Naive thymus-derived CD4-positive, alpha-beta T cell (primary cell): ENCODE measurements at regions of chr19 and their contacts with region 1.

Region 1: GRCh38 chr19:37691881-37692504 is 27.6 kb downstream of the ZNF607 start:
- DNase-seq: peak; percentile 52 to 83 (median 73)
- ATAC-seq: peak; percentile 97
- H3K4me3 ChIP-seq: peak overlapping the region; percentile 95
- H3K4me3 Mint-ChIP-seq: peak overlapping the region; percentile 83 to 98 (median 96)
- H3K27ac ChIP-seq: peak overlapping the region; percentile 82
- H3K27ac Mint-ChIP-seq: peak overlapping the region; percentile 69 to 98 (median 96)
- H3K4me1 ChIP-seq: peaks cover 0 to 4% of the 10 kb centered on the region in 2 donors
- H3K4me1 Mint-ChIP-seq: peaks cover 5 to 17% (median 11%) of the 10 kb centered on the region in 7 donors
- H3K27me3 ChIP-seq: no peaks in the 10 kb centered on the region
- H3K27me3 Mint-ChIP-seq: no peaks in the 10 kb centered on the region

Region 2: DNA sequence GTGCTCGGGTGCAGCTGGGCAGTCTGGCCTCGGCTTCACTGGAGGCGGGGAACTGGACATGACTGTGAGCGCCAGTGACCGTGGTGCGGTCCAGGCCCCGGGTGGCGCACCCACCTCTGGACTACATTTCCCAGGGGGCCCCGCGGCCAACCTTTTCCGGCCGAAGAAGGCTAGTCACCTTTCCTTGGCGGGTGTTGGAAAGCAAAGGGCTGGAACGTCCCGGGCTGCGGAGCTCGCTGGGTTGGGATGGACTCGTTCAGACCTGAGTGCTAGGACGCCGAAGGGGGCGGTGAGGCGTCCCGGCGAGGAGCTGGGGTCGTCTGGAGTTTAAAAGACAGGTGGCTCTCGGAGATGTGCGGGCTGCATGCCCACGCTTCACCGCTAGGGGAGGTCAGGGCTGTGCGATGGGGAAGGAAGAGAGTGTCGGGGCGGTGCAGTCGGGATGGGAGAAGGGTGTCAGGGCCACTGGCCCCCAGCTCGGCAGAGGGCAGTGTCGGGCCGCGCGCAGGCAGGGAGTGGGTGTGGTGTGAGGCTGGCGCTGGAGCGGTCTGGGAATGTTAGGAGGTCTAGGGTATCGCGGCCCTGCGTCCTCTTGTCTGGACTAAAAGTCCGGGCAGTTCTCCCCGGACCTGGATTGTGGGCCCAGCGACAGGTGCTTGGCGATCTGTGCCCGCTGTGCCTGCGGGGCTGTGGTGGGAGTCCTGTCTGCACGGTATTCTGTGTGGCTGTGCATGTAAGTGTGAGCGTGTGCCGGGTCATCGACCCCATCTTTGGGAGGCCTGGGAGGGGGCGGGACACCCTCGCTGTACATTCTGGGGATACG is 718.8 kb before region 1 on chr19:
- CTCF ChIA-PET with region 1: no interaction called
- POLR2A ChIA-PET with region 1: no interaction called
- intact Hi-C with region 1: loop called in 1 of 2 experiments (anchors 1 kb)
- DNase-seq: peak; percentile 56 to 84 (median 73)
- ATAC-seq: peak; percentile 96
- H3K4me3 ChIP-seq: peak overlapping the region; percentile 100
- H3K4me3 Mint-ChIP-seq: peak overlapping the region; percentile 92 to 99 (median 97)
- H3K27ac ChIP-seq: peak overlapping the region; percentile 75
- H3K27ac Mint-ChIP-seq: peak overlapping the region; percentile 83 to 97 (median 92)
- H3K4me1 ChIP-seq: peaks cover 5 to 15% of the 10 kb centered on the region in 2 donors
- H3K4me1 Mint-ChIP-seq: peaks cover 9 to 22% (median 13%) of the 10 kb centered on the region in 7 donors
- H3K27me3 ChIP-seq: no peaks in the 10 kb centered on the region
- H3K27me3 Mint-ChIP-seq: no peaks in the 10 kb centered on the region

Region 3: DNA sequence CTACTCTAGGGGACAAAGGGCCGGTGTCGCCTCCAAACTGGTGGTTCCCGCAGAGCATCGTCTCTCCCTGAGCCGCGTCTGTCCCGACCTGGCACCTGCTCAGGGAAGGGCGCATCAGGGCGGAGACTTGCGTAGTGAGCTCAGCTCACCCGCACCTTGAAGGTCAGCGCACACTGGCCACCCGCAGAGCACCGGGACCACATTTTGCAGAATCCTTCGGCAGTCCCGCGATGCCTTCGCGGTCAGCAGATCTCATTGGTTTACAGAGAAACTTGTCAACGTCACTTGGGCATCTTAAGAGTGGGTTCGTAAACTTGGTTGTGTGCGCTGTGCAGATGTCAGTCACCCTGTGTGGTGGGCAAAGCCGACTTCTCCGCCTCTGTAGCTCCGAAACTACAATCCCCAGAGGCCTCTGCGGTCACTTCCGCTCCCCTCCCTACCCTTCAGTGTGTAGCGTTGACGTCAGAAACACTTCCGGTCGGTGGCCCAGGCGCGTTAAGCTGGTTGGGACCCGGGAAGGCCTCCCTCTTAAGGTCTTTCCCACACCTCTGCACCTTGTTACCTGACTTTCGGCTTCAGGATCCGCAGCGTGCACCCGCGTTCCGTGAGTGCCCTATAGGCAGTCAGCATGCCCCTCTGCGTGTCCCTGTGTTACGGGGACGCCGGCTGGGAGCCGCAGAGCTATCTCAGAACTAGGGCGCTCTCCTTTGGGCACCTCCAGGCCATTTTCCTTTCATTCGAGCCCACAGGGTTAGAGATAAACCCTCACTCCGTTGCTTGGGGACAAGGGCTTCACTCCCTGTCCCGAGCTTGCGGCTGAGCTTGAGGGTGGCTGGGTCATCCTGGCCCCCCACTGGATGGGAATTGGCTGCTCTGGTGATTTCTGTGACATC is 357.6 kb before region 1 on chr19:
- CTCF ChIA-PET with region 1: no interaction called
- POLR2A ChIA-PET with region 1: no interaction called
- intact Hi-C with region 1: loop called in 1 of 2 experiments (anchors 10 kb)
- DNase-seq: peak; percentile 52 to 93 (median 84)
- ATAC-seq: peak; percentile 99
- H3K4me3 ChIP-seq: peak overlapping the region; percentile 69
- H3K4me3 Mint-ChIP-seq: peak overlapping the region; percentile 82 to 93 (median 90)
- H3K27ac ChIP-seq: peak overlapping the region; percentile 88
- H3K27ac Mint-ChIP-seq: peak overlapping the region; percentile 77 to 97 (median 93)
- H3K4me1 ChIP-seq: peaks cover 6 to 10% of the 10 kb centered on the region in 2 donors
- H3K4me1 Mint-ChIP-seq: peaks cover 9 to 47% (median 33%) of the 10 kb centered on the region in 7 donors
- H3K27me3 ChIP-seq: no peaks in the 10 kb centered on the region
- H3K27me3 Mint-ChIP-seq: no peaks in the 10 kb centered on the region

Region 4: DNA sequence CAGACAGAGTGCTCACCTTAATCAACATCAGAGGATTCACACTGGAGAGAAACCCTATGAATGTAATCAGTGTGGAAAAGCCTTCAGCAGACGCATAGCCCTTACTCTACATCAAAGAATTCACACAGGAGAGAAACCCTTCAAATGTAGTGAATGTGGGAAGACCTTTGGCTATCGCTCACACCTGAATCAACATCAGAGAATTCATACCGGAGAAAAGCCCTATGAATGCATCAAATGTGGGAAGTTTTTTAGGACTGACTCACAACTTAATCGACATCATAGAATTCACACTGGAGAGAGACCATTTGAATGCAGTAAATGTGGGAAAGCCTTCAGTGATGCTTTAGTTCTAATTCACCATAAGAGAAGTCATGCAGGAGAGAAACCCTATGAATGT is 302.8 kb before region 1 on chr19:
- CTCF ChIA-PET with region 1: no interaction called
- POLR2A ChIA-PET with region 1: no interaction called
- intact Hi-C with region 1: no loop called
- DNase-seq: no peak
- ATAC-seq: no peak
- H3K4me3 ChIP-seq: no peak overlapping the region
- H3K4me3 Mint-ChIP-seq: no peak overlapping the region
- H3K27ac ChIP-seq: no peak overlapping the region
- H3K27ac Mint-ChIP-seq: no peak overlapping the region
- H3K4me1 ChIP-seq: no peaks in the 10 kb centered on the region
- H3K4me1 Mint-ChIP-seq: no peaks in the 10 kb centered on the region
- H3K27me3 ChIP-seq: no peaks in the 10 kb centered on the region
- H3K27me3 Mint-ChIP-seq: no peaks in the 10 kb centered on the region

Region 5: DNA sequence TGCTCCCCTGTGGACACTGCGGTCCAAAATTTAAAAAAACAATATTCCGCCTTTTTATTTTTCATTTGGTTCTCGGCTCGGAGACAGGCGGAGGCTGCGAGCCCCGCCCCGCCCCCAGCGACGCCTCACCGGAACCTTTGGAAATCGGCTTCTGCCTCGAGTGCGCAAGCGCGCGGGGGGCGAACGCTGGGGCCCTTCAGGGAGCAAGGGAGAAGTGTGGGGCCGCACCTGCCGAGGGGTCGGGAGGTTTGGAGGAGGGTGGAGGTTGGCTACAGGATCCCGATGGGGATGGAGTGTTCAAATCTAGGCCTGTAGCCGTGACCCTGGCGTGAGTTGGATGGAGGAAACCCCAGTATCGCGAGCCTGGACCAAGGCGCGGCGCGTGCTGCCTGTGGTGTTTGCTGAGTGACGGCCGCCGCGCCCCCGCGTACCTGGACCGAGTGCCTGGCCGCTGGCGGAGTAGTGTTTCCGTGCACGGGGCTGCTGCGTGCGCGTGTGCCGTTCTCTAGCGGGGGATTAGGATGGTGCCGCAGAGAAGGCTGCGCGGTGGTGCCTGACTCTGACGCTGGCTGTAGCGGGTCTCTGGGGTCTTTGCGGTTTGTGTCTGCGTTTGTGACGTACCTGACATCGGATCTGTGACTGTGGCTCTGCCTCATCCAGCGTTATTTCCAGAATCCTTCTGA is 36.2 kb before region 1 on chr19:
- CTCF ChIA-PET with region 1: interaction called, 3 read pairs
- POLR2A ChIA-PET with region 1: interaction called, 3 read pairs
- intact Hi-C with region 1: loop called in 1 of 2 experiments (anchors 1 kb)
- DNase-seq: peak; percentile 74 to 90 (median 86)
- ATAC-seq: peak; percentile 86
- H3K4me3 ChIP-seq: peak overlapping the region; percentile 95
- H3K4me3 Mint-ChIP-seq: peak overlapping the region; percentile 82 to 99 (median 96)
- H3K27ac ChIP-seq: peak overlapping the region; percentile 89
- H3K27ac Mint-ChIP-seq: peak overlapping the region; percentile 81 to 99 (median 97)
- H3K4me1 ChIP-seq: peaks cover 8 to 16% of the 10 kb centered on the region in 2 donors
- H3K4me1 Mint-ChIP-seq: peaks cover 28 to 40% (median 33%) of the 10 kb centered on the region in 7 donors
- H3K27me3 ChIP-seq: no peaks in the 10 kb centered on the region
- H3K27me3 Mint-ChIP-seq: peaks cover 0 to 3% (median 0%) of the 10 kb centered on the region in 5 donors

Region 6: GRCh38 chr19:37719111-37719926 is 27.3 kb after region 1 on chr19 and contains the start of gene ZNF607:
- CTCF ChIA-PET with region 1: no interaction called
- POLR2A ChIA-PET with region 1: interaction called, 4 read pairs
- intact Hi-C with region 1: loop called in 1 of 2 experiments (anchors 2 kb)
- DNase-seq: peak; percentile 43 to 80 (median 70)
- ATAC-seq: peak; percentile 87
- H3K4me3 ChIP-seq: peak within 1 kb of the TSS; percentile 63
- H3K4me3 Mint-ChIP-seq: peak within 1 kb of the TSS; percentile 80 to 95 (median 91)
- H3K27ac ChIP-seq: peak within 1 kb of the TSS; percentile 77
- H3K27ac Mint-ChIP-seq: peak within 1 kb of the TSS; percentile 80 to 98 (median 86)
- H3K4me1 ChIP-seq: peaks cover 6 to 7% of the 10 kb centered on the region in 2 donors
- H3K4me1 Mint-ChIP-seq: peaks cover 7 to 17% (median 10%) of the 10 kb centered on the region in 7 donors
- H3K27me3 ChIP-seq: no peaks in the 10 kb centered on the region
- H3K27me3 Mint-ChIP-seq: peaks cover 0 to 5% (median 0%) of the 10 kb centered on the region in 5 donors
- total RNA-seq, gene ZNF607: 3.5 to 10.8 (median 6.5) TPM